ENCODE measurements at regions of chr13 and their contacts with region 1.

Region 1: DNA sequence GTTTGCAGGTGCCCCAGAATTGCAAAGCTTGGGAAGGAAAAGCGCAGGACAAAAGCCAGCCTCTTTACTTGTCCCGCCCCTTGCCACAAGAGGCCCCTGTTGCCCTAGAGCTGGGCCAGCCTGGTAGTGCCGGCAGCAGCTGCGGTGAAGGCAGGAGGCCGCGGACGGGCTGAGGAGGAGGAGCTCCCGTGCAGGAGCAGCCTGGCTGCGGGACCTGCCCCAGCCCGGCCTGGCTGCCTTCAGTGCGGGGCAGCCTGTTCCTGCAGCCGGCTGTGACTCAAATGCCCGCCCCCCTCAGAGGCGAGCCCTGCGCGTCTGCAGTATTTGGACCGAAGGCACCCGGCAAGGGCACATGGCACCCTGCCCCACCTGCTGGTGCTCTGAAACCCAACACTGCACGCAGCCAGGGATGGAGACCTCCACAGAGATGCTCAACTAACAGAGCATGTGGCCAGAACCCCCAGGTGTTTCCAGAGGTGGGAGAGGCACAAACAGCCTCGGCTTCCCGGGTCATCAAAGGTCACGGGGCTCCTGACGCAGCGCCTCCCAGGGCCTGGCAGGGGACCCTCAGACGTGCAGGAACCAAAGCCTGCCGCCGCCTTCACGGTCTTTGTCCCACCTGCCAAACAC is 29.7 kb downstream of the NAXD start:
- DNase-seq: peak; percentile 64
- H3K4me3 ChIP-seq: no peak overlapping the region
- H3K27ac ChIP-seq: no peak overlapping the region
- H3K4me1 ChIP-seq: peaks cover 11% of the 10 kb centered on the region
- CTCF ChIP-seq: peak; percentile 66

Region 2: DNA sequence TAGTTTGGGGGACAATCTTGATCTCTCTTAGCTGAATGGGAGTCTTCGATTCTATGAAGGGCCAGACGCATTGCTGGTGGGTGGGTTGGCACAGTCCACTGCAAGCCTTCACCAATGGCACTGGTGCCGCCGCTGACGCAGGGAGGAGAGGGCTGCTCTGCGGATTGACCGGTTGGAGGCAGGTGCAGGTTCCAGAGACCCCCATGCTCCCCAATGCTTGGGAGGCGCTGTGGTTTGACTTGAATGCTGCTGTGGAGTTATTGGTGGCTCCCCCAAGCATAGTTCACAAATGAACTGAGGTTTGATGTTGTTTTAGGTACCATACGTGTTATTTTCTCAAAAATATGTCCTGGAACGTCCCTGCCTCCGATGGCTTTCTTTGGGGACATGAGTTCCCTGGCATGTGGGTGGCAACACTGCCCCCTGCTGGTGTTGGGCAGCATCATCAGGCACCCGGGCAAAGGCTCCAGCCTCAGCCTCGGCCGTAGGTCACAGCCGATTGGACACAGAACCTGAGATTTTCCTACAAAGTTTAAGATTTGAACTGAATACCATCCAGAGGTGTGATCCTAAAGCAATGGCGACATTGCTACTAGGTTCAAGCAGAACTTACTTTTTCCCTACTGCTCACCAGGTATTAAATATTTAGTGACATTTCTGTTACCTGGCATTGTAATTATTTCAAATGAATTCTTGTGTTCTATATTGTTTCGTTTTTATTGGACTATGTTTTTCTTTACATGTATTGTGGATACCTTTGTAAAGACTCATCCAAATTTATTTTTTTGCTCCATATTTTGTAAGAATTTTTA is 174.4 kb after region 1 on chr13:
- CTCF ChIA-PET with region 1: no interaction called
- POLR2A ChIA-PET with region 1: no interaction called
- intact Hi-C with region 1: loop called (anchors 1 kb)
- DNase-seq: peak; percentile 48
- H3K4me3 ChIP-seq: no peak overlapping the region
- H3K27ac ChIP-seq: no peak overlapping the region
- H3K4me1 ChIP-seq: no peaks in the 10 kb centered on the region
- CTCF ChIP-seq: peak; percentile 84